ENCODE measurements at regions of chr10 and their contacts with region 1.

Region 1: GRCh38 chr10:25113191-25114035 is 61.4 kb upstream of the GPR158 start:
- DNase-seq: peak; percentile 61
- CTCF ChIP-seq: peak; percentile 80

Region 2: GRCh38 chr10:25125201-25125611 is 11.8 kb after region 1 on chr10:
- CTCF ChIA-PET with region 1: interaction called, 22 read pairs
- POLR2A ChIA-PET with region 1: no interaction called
- DNase-seq: no peak
- CTCF ChIP-seq: no peak

Region 3: GRCh38 chr10:25130906-25131305 is 17.5 kb after region 1 on chr10:
- CTCF ChIA-PET with region 1: interaction called, 14 read pairs
- POLR2A ChIA-PET with region 1: no interaction called
- DNase-seq: no peak
- CTCF ChIP-seq: no peak

Region 4: DNA sequence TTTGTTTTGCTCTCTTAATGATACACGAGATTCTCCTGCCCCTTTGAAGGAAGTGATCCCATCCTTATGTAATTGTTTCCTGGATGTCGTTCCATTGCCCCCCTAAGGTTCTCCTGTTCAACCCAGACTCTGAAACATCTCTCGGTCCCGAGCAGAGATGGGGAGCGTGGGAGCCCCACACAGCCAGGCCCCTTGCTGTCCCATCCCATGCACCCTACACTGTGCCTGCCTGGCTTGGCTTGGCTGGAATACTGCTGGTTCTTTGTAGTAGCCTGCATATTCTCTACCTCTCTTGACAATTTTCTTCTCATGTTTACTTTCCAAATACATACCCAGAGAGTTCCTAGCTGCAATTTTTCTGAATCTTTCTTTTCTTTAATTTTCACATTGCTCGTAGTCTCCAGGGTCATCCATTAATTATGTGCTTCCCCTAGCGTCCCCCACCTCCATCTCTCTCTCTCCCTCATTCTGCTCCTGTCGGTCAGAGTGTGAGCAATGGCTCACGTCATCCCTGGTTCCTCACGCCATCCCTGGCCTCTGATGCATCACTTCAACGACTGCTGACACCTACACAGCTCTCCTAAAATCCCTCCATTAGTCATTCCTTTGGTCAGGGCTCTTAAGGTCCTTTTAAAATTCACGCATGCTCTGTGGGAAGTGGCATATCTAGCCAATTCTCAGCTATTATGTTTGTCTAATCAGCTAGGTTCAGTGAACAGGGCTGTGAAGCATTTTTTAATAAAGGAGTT is 28.9 kb after region 1 on chr10:
- CTCF ChIA-PET with region 1: interaction called, 19 read pairs
- POLR2A ChIA-PET with region 1: no interaction called
- DNase-seq: no peak
- CTCF ChIP-seq: no peak

Region 5: GRCh38 chr10:25226775-25227682 is 113.6 kb after region 1 on chr10:
- CTCF ChIA-PET with region 1: interaction called, 22 read pairs
- POLR2A ChIA-PET with region 1: no interaction called
- DNase-seq: peak; percentile 8
- CTCF ChIP-seq: peak; percentile 43

Region 6: GRCh38 chr10:25232204-25232603 is 118.8 kb after region 1 on chr10:
- CTCF ChIA-PET with region 1: interaction called, 22 read pairs
- POLR2A ChIA-PET with region 1: no interaction called
- DNase-seq: no peak
- CTCF ChIP-seq: no peak

Measured in GM10248 (cell line).